SK-N-SH (cell line): ENCODE measurements at regions of chr11 and their contacts with region 1.

Region 1: GRCh38 chr11:47355283-47356128 is 3.0 kb upstream of the MYBPC3 start:
- DNase-seq: peak; percentile 93
- H3K4me3 ChIP-seq: peak overlapping the region; percentile 28 to 65
- H3K27ac ChIP-seq: no peak overlapping the region
- H3K4me1 ChIP-seq: peaks cover 0 to 10% of the 10 kb centered on the region in 2 experiments; a peak in 1 of 4 replicates
- H3K27me3 ChIP-seq: no peaks in the 10 kb centered on the region
- CTCF ChIP-seq: peak; percentile 96
- EP300 ChIP-seq: no peak
- RAD21 ChIP-seq: peak; percentile 97

Region 2: DNA sequence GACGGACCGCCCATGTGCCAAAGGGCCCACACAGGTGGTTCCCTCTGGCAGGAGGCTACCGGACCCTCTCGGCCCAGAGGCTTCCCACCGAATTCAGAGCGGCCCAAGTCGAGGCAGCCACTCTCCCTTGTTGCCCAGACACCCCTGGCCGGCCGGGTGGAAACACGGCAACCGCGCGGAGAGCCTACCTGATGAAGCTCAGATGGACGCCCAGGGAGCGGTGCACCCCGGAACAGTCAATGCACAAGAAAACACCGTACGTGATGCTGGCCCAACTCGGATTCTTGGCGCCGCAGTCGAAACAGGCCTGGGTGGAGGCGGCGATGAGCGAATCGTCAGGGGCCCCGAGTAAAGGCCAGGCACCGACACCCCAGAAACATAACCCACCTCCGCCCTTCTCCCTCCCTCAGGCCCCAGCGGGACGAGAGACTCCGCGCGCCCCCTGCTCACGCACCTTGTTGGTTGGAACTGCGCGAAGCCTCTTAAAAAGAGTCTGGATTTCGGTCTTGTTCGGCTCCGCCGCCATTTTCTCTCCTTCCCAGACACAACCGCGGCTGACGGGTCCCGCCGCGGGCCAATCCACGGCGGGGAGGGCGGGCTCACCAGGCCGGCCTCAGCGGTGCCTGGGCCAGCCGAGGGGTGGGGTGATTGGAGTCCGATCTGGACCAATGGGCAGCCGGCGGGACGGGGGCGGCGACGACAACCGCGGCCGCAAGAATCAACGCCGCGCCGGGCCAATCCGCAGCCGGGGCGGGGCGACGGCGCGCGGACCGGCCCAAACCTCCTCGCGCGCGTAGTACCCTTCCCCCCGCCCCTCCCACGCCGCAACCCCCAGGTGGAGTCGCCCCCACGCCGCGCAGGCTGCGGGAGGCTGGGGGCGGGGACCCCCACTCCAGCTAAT is 178.9 kb before region 1 on chr11 and contains the start of gene ARFGAP2:
- CTCF ChIA-PET with region 1: interaction called, 26 read pairs
- POLR2A ChIA-PET with region 1: no interaction called
- DNase-seq: peak; percentile 100
- H3K4me3 ChIP-seq: peak within 1 kb of the TSS; percentile 88 to 99
- H3K27ac ChIP-seq: peak within 1 kb of the TSS; percentile 94
- H3K4me1 ChIP-seq: peaks cover 15 to 18% of the 10 kb centered on the region in 2 experiments
- H3K27me3 ChIP-seq: no peaks in the 10 kb centered on the region
- CTCF ChIP-seq: no peak
- EP300 ChIP-seq: peak in 1 of 2 experiments; percentile 6; a peak in 1 of 4 replicates
- RAD21 ChIP-seq: no peak
- polyA plus RNA-seq, gene ARFGAP2: 52.5 and 64.0 TPM in 2 replicates

Region 3: DNA sequence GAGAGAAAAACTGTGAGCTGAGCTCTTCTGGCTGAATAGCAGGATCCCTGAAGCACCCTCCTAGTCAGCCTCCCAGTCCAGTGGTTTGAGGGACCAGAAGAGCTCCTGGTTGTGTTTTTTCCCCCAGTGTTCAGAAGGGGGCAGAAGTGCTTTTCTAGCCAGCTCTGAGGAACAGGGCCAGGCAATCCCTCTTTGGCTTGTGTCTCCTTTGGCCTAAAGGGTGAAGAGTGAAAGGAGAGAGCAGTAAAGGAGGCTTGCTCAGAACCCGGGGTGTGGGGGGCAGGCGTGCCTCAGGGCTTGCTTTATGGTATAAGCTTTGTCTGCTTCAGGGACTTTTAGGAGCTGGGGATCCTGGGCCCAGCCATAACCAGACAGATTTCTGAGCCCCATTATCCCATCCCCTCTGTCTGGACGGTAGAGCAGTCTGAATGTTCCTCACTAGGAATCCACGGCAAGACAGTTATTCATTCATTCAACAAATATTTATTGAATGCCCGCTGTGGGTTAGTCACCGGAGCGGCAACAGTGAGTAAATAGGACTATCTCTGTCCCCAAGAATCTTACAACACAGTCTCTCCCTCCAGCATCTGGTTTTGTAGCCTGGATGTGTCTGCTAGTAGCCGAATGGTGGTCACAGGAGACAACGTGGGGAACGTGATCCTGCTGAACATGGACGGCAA is 121.4 kb before region 1 on chr11:
- CTCF ChIA-PET with region 1: interaction called, 17 read pairs
- POLR2A ChIA-PET with region 1: no interaction called
- DNase-seq: peak; percentile 31
- H3K4me3 ChIP-seq: no peak overlapping the region
- H3K27ac ChIP-seq: peak overlapping the region in 1 of 2 experiments; percentile 20; a peak in 1 of 4 replicates
- H3K4me1 ChIP-seq: peaks cover 2 to 14% of the 10 kb centered on the region in 2 experiments; a peak in 2 of 4 replicates
- H3K27me3 ChIP-seq: no peaks in the 10 kb centered on the region
- CTCF ChIP-seq: peak; percentile 38
- EP300 ChIP-seq: no peak
- RAD21 ChIP-seq: peak; percentile 51

Region 4: DNA sequence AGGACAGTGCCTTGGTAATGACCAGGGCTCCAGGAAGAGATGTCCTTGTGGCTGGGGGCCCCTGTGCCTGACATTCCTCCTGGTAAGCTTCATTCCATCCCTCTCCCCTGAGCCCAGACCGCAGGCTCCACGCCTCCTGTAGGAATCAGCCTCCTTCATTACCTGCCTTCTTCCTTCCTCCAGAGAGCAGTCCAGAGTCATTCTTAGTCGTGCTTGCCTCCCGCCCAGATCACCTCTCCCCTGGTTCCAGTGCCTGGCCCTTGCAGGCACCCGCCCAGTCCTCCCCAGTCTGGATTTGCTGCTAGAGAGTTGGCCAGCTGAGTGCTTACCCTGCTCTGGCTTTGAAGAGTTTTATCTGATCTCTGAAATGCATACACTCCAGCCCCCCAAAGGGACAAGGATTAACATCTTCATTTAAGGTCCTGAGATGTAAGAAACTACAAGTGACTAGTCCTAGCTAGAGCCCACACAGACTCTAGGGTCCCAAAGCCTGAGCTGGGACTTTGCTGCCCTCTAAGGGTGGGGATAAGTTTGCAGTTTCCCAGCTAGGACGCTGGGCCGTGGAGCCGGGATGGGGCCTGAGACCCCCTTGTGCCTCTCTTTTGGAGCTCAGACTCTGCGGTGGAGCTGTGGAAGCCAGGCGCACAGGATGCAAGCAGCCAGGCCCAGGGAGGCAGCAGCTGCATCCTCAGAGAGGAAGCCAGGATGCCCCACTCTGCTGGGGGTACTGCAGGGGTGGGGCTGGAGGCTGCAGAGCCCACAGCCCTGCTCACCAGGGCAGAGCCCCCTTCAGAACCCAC is 96.1 kb before region 1 on chr11:
- CTCF ChIA-PET with region 1: interaction called, 29 read pairs
- POLR2A ChIA-PET with region 1: no interaction called
- DNase-seq: peak; percentile 74
- H3K4me3 ChIP-seq: no peak overlapping the region
- H3K27ac ChIP-seq: no peak overlapping the region
- H3K4me1 ChIP-seq: peaks cover 17 to 20% of the 10 kb centered on the region in 2 experiments; a peak in 3 of 4 replicates
- H3K27me3 ChIP-seq: no peaks in the 10 kb centered on the region
- CTCF ChIP-seq: peak; percentile 58
- EP300 ChIP-seq: no peak
- RAD21 ChIP-seq: peak; percentile 73

Region 5: GRCh38 chr11:47278058-47278457 is 77.4 kb before region 1 on chr11:
- CTCF ChIA-PET with region 1: interaction called, 25 read pairs
- POLR2A ChIA-PET with region 1: no interaction called
- DNase-seq: no peak
- H3K4me3 ChIP-seq: no peak overlapping the region
- H3K27ac ChIP-seq: peak overlapping the region; percentile 23 to 40; a peak in 3 of 4 replicates
- H3K4me1 ChIP-seq: no peaks in the 10 kb centered on the region; a peak in 1 of 4 replicates
- H3K27me3 ChIP-seq: no peaks in the 10 kb centered on the region
- CTCF ChIP-seq: no peak
- EP300 ChIP-seq: no peak
- RAD21 ChIP-seq: no peak

Region 6: DNA sequence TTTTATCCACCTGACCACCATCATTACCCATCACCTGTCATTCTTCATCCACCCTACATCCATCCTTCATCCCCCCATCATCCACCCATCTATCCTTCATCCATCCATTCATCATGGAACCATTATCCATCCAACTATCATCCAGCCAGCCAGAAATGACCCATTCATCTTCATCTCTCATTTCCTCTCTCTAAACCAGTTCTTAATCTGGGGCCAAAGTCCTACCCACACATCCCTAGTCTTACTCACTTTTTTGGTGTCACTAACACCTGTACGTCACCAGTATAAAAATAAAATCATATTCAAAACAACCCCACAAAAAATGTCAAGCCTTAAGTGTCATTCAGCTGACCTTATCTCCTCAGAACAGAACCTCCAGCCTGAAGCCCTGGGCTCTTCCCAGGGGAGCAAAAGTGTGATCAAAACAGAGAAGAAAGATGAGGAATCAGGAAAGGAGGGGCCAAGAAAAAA is 10.5 kb after region 1 on chr11:
- CTCF ChIA-PET with region 1: interaction called, 11 read pairs
- POLR2A ChIA-PET with region 1: no interaction called
- DNase-seq: no peak
- H3K4me3 ChIP-seq: no peak overlapping the region
- H3K27ac ChIP-seq: no peak overlapping the region
- H3K4me1 ChIP-seq: no peaks in the 10 kb centered on the region
- H3K27me3 ChIP-seq: no peaks in the 10 kb centered on the region
- CTCF ChIP-seq: no peak
- EP300 ChIP-seq: no peak
- RAD21 ChIP-seq: no peak

Region 7: GRCh38 chr11:47595029-47595428 is 239.5 kb after region 1 on chr11:
- CTCF ChIA-PET with region 1: no interaction called
- POLR2A ChIA-PET with region 1: no interaction called
- DNase-seq: no peak
- H3K4me3 ChIP-seq: no peak overlapping the region
- H3K27ac ChIP-seq: no peak overlapping the region
- H3K4me1 ChIP-seq: peaks cover 0 to 11% of the 10 kb centered on the region in 2 experiments; a peak in 1 of 4 replicates
- H3K27me3 ChIP-seq: peaks cover 13% of the 10 kb centered on the region; the same call in 1 of the 2 replicates
- CTCF ChIP-seq: no peak
- EP300 ChIP-seq: no peak
- RAD21 ChIP-seq: no peak

Region 8: GRCh38 chr11:47616726-47617416 is 261.4 kb after region 1 on chr11:
- CTCF ChIA-PET with region 1: no interaction called
- POLR2A ChIA-PET with region 1: no interaction called
- DNase-seq: no peak
- H3K4me3 ChIP-seq: peak overlapping the region in 1 of 2 experiments; percentile 36; a peak in 1 of 4 replicates
- H3K27ac ChIP-seq: peak overlapping the region in 1 of 2 experiments; percentile 44; a peak in 1 of 4 replicates
- H3K4me1 ChIP-seq: peaks cover 0 to 9% of the 10 kb centered on the region in 2 experiments; a peak in 1 of 4 replicates
- H3K27me3 ChIP-seq: no peaks in the 10 kb centered on the region
- CTCF ChIP-seq: peak; percentile 83
- EP300 ChIP-seq: no peak
- RAD21 ChIP-seq: peak; percentile 83